Activated CD4-positive, alpha-beta memory T cell treated with anti-CD3 and anti-CD28 coated beads for 36 hours (primary cell): ENCODE measurements at regions of chr15 and their contacts with region 1.

Region 1: GRCh38 chr15:26070095-26070532 is 207.0 kb upstream of the ATP10A start:
- DNase-seq: no peak
- H3K4me3 Mint-ChIP-seq: no peak overlapping the region
- H3K27ac Mint-ChIP-seq: no peak overlapping the region
- H3K4me1 Mint-ChIP-seq: peaks cover 21% of the 10 kb centered on the region
- H3K27me3 Mint-ChIP-seq: peaks cover 6% of the 10 kb centered on the region

Region 2: DNA sequence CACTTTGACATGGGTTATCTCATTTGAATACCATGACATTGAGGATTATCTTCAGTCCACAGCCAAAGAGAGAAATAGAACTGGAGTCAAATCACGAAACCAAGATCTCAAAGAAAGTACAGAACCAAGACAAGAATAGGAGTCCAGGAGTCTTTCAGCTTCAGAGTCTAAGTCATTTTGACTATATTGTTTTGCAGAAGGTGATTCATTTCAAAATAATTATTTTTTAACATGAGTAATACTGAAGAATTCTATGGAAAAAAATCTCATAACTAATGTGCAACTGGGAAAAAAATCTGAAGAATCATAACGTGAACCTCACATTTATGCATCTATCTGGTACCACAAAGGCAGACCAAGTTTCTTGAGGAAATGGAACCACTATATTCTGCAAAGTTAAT is 691.6 kb before region 1 on chr15:
- CTCF ChIA-PET with region 1: no interaction called
- POLR2A ChIA-PET with region 1: no interaction called
- intact Hi-C with region 1: loop called (anchors 5 kb)
- DNase-seq: no peak
- H3K4me3 Mint-ChIP-seq: no peak overlapping the region
- H3K27ac Mint-ChIP-seq: no peak overlapping the region
- H3K4me1 Mint-ChIP-seq: peaks cover 41% of the 10 kb centered on the region
- H3K27me3 Mint-ChIP-seq: no peaks in the 10 kb centered on the region

Region 3: DNA sequence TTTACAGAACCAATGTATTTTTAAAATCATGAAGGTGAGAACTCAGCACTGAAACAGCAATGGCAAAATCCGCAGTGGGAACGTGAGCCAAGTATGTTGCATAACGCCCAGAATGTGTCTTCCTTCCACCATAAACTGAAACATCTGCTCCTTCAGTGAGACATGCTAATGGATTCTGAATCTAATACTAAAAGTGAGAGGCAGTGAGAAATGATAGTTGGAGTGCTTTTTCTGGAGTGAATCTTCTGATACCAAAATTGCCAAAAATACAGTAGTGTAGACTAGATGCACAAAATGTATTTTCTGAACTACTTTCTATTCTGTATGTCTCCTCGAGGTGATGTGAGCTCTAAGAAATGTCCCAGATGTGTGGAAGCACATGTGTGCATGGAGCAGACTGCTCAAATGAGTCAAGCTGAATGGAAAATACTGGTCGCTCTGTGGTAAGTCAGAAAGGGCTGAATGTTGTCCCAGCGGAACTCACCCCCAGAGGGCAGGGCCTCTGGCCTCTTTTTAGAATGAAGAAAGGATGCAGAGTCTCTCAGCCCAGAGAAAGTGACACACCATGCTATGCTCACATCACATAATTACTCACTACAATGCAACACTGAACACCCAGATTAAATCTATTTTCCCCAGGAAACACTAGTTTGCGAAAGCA is 280.0 kb before region 1 on chr15:
- CTCF ChIA-PET with region 1: no interaction called
- POLR2A ChIA-PET with region 1: no interaction called
- intact Hi-C with region 1: loop called (anchors 1 kb)
- DNase-seq: peak; percentile 75
- H3K4me3 Mint-ChIP-seq: peak overlapping the region; percentile 25
- H3K27ac Mint-ChIP-seq: peak overlapping the region; percentile 84
- H3K4me1 Mint-ChIP-seq: peaks cover 58% of the 10 kb centered on the region
- H3K27me3 Mint-ChIP-seq: no peaks in the 10 kb centered on the region

Region 4: GRCh38 chr15:26082221-26083109 is 12.4 kb after region 1 on chr15:
- CTCF ChIA-PET with region 1: no interaction called
- POLR2A ChIA-PET with region 1: interaction called, 3 read pairs
- intact Hi-C with region 1: loop called (anchors 1 kb)
- DNase-seq: peak; percentile 97
- H3K4me3 Mint-ChIP-seq: peak overlapping the region; percentile 76
- H3K27ac Mint-ChIP-seq: peak overlapping the region; percentile 95
- H3K4me1 Mint-ChIP-seq: peaks cover 45% of the 10 kb centered on the region
- H3K27me3 Mint-ChIP-seq: peaks cover 2% of the 10 kb centered on the region

Region 5: GRCh38 chr15:26191193-26191592 is 121.1 kb after region 1 on chr15:
- CTCF ChIA-PET with region 1: no interaction called
- POLR2A ChIA-PET with region 1: no interaction called
- intact Hi-C with region 1: no loop called
- DNase-seq: no peak
- H3K4me3 Mint-ChIP-seq: no peak overlapping the region
- H3K27ac Mint-ChIP-seq: no peak overlapping the region
- H3K4me1 Mint-ChIP-seq: no peaks in the 10 kb centered on the region
- H3K27me3 Mint-ChIP-seq: no peaks in the 10 kb centered on the region

Region 6: GRCh38 chr15:26212109-26212508 is 142.0 kb after region 1 on chr15:
- CTCF ChIA-PET with region 1: no interaction called
- POLR2A ChIA-PET with region 1: no interaction called
- intact Hi-C with region 1: no loop called
- DNase-seq: no peak
- H3K4me3 Mint-ChIP-seq: no peak overlapping the region
- H3K27ac Mint-ChIP-seq: no peak overlapping the region
- H3K4me1 Mint-ChIP-seq: no peaks in the 10 kb centered on the region
- H3K27me3 Mint-ChIP-seq: no peaks in the 10 kb centered on the region

Region 7: GRCh38 chr15:26260517-26261133 is 190.5 kb after region 1 on chr15:
- CTCF ChIA-PET with region 1: no interaction called
- POLR2A ChIA-PET with region 1: no interaction called
- intact Hi-C with region 1: loop called (anchors 2 kb)
- DNase-seq: peak; percentile 37
- H3K4me3 Mint-ChIP-seq: no peak overlapping the region
- H3K27ac Mint-ChIP-seq: no peak overlapping the region
- H3K4me1 Mint-ChIP-seq: no peaks in the 10 kb centered on the region
- H3K27me3 Mint-ChIP-seq: peaks cover 4% of the 10 kb centered on the region